CD4-positive, alpha-beta memory T cell (primary cell): ENCODE measurements at regions of chr15 and their contacts with region 1.

Region 1: GRCh38 chr15:66946578-66947164 is 118.7 kb upstream of the SMAD3 start:
- DNase-seq: peak; percentile 65 to 73 (median 71)
- H3K4me3 ChIP-seq: no peak overlapping the region
- H3K4me3 Mint-ChIP-seq: no peak overlapping the region
- H3K27ac ChIP-seq: no peak overlapping the region
- H3K27ac Mint-ChIP-seq: no peak overlapping the region
- H3K4me1 ChIP-seq: no peaks in the 10 kb centered on the region
- H3K4me1 Mint-ChIP-seq: peaks cover 0 to 4% (median 2%) of the 10 kb centered on the region in 4 donors
- H3K27me3 ChIP-seq: no peaks in the 10 kb centered on the region
- H3K27me3 Mint-ChIP-seq: no peaks in the 10 kb centered on the region

Region 2: GRCh38 chr15:67181191-67181645 is 234.5 kb after region 1 on chr15:
- CTCF ChIA-PET with region 1: no interaction called
- POLR2A ChIA-PET with region 1: no interaction called
- intact Hi-C with region 1: loop called (anchors 1 kb)
- DNase-seq: no peak
- H3K4me3 ChIP-seq: no peak overlapping the region
- H3K4me3 Mint-ChIP-seq: no peak overlapping the region
- H3K27ac ChIP-seq: no peak overlapping the region
- H3K27ac Mint-ChIP-seq: peak overlapping the region in 3 of 7 donors; percentile 37 to 68 (median 64)
- H3K4me1 ChIP-seq: no peaks in the 10 kb centered on the region
- H3K4me1 Mint-ChIP-seq: peaks cover 3 to 20% (median 13%) of the 10 kb centered on the region in 4 donors
- H3K27me3 ChIP-seq: no peaks in the 10 kb centered on the region
- H3K27me3 Mint-ChIP-seq: no peaks in the 10 kb centered on the region

Region 3: DNA sequence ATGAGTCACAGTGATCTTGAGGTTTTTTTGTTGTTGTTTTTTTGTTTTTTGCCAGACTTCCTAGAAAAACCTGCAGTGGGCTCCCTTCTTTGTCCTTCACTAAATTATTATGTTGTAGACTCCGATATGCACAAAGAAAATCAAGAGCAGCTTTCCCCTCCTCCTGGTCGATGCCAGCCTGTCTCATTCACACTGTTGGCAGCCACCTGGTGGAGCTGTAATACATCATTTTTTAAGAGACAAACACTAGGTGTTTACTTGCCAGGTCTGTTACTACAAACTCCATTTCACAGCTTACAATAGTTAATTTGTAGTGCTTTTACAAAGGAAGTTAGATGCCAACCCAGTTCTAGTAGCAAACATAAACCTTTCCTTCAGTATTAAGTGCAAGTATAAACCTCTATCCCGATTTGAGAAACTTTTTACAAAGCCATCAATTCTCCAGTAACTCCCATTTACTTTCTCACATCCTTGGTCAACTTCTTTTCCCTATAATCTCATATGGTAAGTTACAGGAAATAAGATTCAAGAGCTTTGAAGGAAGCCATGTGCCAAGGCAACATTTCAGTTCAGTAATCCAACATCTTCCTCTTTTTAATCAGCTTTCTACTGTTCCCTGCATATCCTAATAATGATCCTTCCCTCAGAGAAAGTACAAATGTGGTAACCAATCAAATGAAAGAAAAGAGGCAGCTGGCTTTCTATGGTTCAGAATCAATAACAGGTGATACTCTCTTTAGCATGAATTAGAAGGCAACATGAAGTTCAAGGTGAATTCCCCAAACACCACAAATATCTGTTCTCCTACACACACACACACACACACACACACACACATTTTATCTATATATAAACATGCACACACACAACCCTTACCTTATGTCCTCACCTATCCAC is 293.8 kb after region 1 on chr15:
- CTCF ChIA-PET with region 1: interaction called, 22 read pairs
- POLR2A ChIA-PET with region 1: no interaction called
- intact Hi-C with region 1: loop called (anchors 1 kb)
- DNase-seq: peak; percentile 27 to 46 (median 40)
- H3K4me3 ChIP-seq: peak overlapping the region in 1 of 2 donors; percentile 46
- H3K4me3 Mint-ChIP-seq: peak overlapping the region; percentile 43 to 88 (median 62)
- H3K27ac ChIP-seq: peak overlapping the region; percentile 53
- H3K27ac Mint-ChIP-seq: peak overlapping the region; percentile 78 to 93 (median 87)
- H3K4me1 ChIP-seq: peaks cover 45% of the 10 kb centered on the region
- H3K4me1 Mint-ChIP-seq: peaks cover 44 to 61% (median 44%) of the 10 kb centered on the region in 4 donors
- H3K27me3 ChIP-seq: no peaks in the 10 kb centered on the region
- H3K27me3 Mint-ChIP-seq: no peaks in the 10 kb centered on the region

Region 4: DNA sequence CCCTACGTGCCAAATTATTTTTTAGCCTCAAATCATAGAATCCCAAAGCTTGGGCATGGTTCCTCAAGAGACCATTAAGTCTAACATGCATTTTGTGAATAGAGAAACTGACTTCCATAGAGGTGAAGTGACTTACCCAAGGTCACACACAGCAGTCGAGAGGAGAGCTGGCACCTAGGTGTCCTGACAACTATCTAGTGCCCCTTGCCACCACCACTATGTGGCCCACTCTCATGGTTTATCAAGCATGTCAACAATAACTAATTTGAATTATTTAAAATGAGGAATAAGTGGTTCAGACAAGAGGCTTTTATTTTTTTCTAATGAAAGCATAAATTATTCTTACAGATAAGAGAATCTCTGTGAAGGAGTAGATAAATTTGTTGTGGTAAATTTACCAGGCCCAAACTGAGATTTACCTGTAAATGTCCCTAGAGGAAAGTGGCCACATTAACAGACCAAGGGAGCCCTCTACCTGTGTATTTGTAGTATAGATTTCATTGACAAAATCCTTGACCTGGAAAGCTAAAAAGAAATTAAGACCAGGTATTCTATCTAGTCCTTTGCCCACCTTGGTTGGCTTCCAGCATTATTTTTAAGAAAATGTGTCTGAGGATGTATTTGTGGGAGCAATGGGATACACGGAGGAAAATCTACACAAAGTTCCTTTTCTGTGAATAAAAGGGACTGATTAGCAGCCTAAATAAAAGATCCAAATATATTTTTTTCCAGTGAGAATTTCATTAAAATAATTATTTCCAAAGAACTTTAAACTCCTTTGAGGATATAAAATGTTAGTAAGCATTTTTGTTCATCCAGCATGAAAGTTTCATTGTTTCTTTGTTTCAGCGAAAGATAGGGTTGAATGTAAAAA is 357.1 kb after region 1 on chr15:
- CTCF ChIA-PET with region 1: interaction called, 184 read pairs
- POLR2A ChIA-PET with region 1: interaction called, 10 read pairs
- intact Hi-C with region 1: loop called (anchors 1 kb)
- DNase-seq: peak; percentile 43 to 55 (median 52)
- H3K4me3 ChIP-seq: no peak overlapping the region
- H3K4me3 Mint-ChIP-seq: no peak overlapping the region
- H3K27ac ChIP-seq: no peak overlapping the region
- H3K27ac Mint-ChIP-seq: no peak overlapping the region
- H3K4me1 ChIP-seq: no peaks in the 10 kb centered on the region
- H3K4me1 Mint-ChIP-seq: no peaks in the 10 kb centered on the region
- H3K27me3 ChIP-seq: no peaks in the 10 kb centered on the region
- H3K27me3 Mint-ChIP-seq: peaks cover 2 to 3% of the 10 kb centered on the region in 2 donors

Region 5: GRCh38 chr15:67433495-67434099 is 486.9 kb after region 1 on chr15:
- CTCF ChIA-PET with region 1: interaction called, 19 read pairs
- POLR2A ChIA-PET with region 1: no interaction called
- intact Hi-C with region 1: no loop called
- DNase-seq: peak in 1 of 5 donors; percentile 9
- H3K4me3 ChIP-seq: no peak overlapping the region
- H3K4me3 Mint-ChIP-seq: no peak overlapping the region
- H3K27ac ChIP-seq: no peak overlapping the region
- H3K27ac Mint-ChIP-seq: no peak overlapping the region
- H3K4me1 ChIP-seq: no peaks in the 10 kb centered on the region
- H3K4me1 Mint-ChIP-seq: no peaks in the 10 kb centered on the region
- H3K27me3 ChIP-seq: no peaks in the 10 kb centered on the region
- H3K27me3 Mint-ChIP-seq: no peaks in the 10 kb centered on the region

Region 6: DNA sequence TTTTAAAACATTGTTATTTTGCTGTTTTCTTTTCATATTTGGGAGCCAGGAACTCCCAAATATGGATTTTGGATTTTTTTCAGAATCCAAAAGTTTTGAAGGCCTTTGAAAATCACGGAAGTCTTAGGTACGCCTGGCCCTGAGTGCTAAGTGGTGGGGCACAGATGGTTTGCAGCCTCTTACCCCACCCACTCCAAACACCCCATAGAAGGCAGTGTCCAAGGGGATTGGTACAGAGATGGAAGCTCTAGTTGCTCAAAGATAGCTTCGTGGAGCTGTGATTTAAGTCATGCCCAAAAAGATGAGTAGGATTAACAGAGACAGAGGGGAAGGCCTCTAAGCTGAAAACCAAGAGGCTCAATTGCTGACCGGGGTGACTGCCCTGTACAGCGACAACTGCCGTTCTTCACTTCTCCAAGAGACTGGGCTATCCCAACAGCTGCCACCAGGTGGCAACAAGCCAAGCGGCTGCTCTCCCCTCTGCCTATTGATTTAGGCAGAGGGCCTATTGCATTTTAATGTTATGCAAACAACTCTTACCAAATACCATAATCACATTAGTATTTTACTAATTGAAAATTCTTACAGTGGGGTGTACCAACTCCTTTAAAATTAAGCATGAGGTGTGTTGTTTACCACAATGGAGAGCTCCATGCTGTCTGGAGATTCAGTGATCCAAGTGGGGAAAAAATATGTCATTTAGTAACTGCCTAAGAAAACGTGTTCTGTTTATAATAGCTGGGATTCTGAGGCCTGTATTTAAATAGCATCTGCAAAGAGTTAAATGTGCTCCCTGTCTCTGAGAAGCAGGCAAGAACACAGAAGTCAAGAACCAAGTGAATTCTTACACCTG is 510.2 kb after region 1 on chr15:
- CTCF ChIA-PET with region 1: interaction called, 5 read pairs
- POLR2A ChIA-PET with region 1: no interaction called
- intact Hi-C with region 1: loop called (anchors 1 kb)
- DNase-seq: peak; percentile 69 to 75 (median 72)
- H3K4me3 ChIP-seq: no peak overlapping the region
- H3K4me3 Mint-ChIP-seq: peak overlapping the region in 2 of 8 donors; percentile 20 to 26
- H3K27ac ChIP-seq: no peak overlapping the region
- H3K27ac Mint-ChIP-seq: no peak overlapping the region
- H3K4me1 ChIP-seq: no peaks in the 10 kb centered on the region
- H3K4me1 Mint-ChIP-seq: peaks cover 0 to 1% (median 0%) of the 10 kb centered on the region in 4 donors
- H3K27me3 ChIP-seq: no peaks in the 10 kb centered on the region
- H3K27me3 Mint-ChIP-seq: peaks cover 0 to 2% of the 10 kb centered on the region in 2 donors